ENCODE measurements at regions of chr10 and their contacts with region 1.

Region 1: DNA sequence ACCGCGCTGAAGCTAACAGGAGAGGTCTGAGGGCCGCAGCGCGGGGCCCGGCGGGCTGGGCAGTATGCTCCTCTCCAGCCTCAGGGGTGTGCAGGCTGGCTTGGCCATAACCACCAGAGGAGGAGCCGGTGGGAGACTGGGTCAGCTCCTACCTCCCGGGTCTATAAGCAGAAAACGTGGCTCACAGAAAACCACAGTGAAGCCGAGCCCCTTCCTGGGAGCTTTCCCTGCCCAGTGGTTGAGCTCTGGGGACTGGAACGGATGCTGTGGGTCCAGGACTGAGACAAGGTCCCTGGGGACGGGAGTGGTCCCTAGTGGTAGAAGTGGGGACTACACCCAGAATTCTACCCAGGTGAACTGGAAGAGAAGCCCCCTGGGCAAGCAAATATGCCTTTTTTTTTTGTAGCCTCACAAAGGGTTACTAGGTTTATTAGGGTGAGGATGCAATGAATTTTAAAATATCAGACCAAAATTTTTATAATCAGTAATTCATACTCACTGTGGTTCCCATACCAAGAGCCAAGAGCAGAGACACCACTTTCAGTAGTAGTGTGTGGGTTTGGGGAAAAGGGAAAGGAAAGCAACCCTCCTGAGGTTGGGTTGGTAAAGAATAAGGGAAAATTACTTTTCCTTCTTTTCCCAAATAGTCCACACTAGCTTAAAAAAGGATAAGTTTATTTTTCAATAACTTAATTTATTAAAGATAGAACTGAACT is 67.9 kb upstream of the PRKCQ start:
- DNase-seq: peak; percentile 43 to 84 (median 74)
- ATAC-seq: peak; percentile 99
- H3K4me3 ChIP-seq: no peak overlapping the region
- H3K4me3 Mint-ChIP-seq: no peak overlapping the region
- H3K27ac ChIP-seq: no peak overlapping the region
- H3K27ac Mint-ChIP-seq: no peak overlapping the region
- H3K4me1 ChIP-seq: peaks cover 15% of the 10 kb centered on the region
- H3K4me1 Mint-ChIP-seq: peaks cover 22% of the 10 kb centered on the region
- H3K27me3 ChIP-seq: no peaks in the 10 kb centered on the region
- H3K27me3 Mint-ChIP-seq: no peaks in the 10 kb centered on the region
- CTCF ChIP-seq: peak; percentile 90

Region 2: GRCh38 chr10:6445501-6446316 is 202.3 kb before region 1 on chr10:
- CTCF ChIA-PET with region 1: interaction called, 33 read pairs
- POLR2A ChIA-PET with region 1: interaction called, 7 read pairs
- intact Hi-C with region 1: loop called (anchors 1 kb)
- DNase-seq: peak; percentile 36 to 76 (median 64)
- ATAC-seq: peak; percentile 58
- H3K4me3 ChIP-seq: no peak overlapping the region
- H3K4me3 Mint-ChIP-seq: no peak overlapping the region
- H3K27ac ChIP-seq: peak overlapping the region in 1 of 2 experiments; percentile 47
- H3K27ac Mint-ChIP-seq: peak overlapping the region; percentile 83
- H3K4me1 ChIP-seq: peaks cover 8% of the 10 kb centered on the region
- H3K4me1 Mint-ChIP-seq: peaks cover 22% of the 10 kb centered on the region
- H3K27me3 ChIP-seq: no peaks in the 10 kb centered on the region
- H3K27me3 Mint-ChIP-seq: no peaks in the 10 kb centered on the region
- CTCF ChIP-seq: peak; percentile 73

Region 3: DNA sequence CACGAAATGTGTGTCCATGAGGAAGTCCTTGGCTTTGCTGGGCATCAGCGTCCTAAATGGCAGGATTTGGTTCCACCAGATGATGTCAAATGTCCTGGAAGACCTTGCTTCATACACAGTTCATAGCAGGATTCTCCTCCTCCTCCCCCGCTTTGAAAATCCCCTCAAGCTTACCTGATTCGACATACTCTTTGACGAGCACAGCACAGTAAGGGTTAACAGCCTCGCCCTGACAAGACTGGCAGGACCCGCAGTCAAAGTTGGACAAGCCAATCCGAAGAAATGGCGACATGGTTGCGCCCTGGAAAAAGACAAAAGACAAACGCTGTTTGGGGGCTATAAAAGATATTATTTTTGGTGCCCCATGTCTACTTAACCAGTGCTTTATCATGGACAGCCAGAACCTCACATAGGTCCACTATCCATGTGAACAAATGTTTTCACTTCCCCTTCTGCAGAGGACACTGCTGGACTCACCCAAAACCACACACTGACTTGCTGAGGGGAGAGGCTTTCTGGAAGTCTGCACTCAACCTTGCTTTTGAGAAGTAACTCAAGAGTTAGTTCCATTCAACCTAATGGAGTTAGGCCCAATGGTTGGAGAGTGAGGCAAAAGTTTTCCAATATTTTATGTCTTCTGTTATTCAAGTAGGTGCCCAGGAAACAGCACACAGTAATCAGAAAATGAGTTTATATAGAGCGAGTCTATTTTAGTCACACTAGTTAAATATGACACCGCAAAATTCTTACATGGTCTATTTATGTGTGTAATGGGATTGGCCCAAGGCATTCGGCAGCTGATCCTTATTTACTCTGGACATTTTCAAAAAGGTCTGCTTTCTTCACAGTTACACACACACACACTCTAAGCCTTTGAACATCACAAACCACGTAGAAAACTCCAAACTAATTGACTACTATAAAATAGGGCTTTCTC is 132.9 kb before region 1 on chr10:
- CTCF ChIA-PET with region 1: interaction called, 4 read pairs
- POLR2A ChIA-PET with region 1: no interaction called
- intact Hi-C with region 1: loop called (anchors 2 to 5 kb)
- DNase-seq: no peak
- ATAC-seq: no peak
- H3K4me3 ChIP-seq: no peak overlapping the region
- H3K4me3 Mint-ChIP-seq: no peak overlapping the region
- H3K27ac ChIP-seq: peak overlapping the region in 1 of 2 experiments; percentile 33
- H3K27ac Mint-ChIP-seq: peak overlapping the region; percentile 65
- H3K4me1 ChIP-seq: peaks cover 43% of the 10 kb centered on the region
- H3K4me1 Mint-ChIP-seq: peaks cover 79% of the 10 kb centered on the region
- H3K27me3 ChIP-seq: no peaks in the 10 kb centered on the region
- H3K27me3 Mint-ChIP-seq: no peaks in the 10 kb centered on the region
- CTCF ChIP-seq: no peak

Region 4: GRCh38 chr10:6621536-6621935 is 26.4 kb before region 1 on chr10:
- CTCF ChIA-PET with region 1: interaction called, 10 read pairs
- POLR2A ChIA-PET with region 1: no interaction called
- intact Hi-C with region 1: no loop called
- DNase-seq: no peak
- ATAC-seq: no peak
- H3K4me3 ChIP-seq: no peak overlapping the region
- H3K4me3 Mint-ChIP-seq: no peak overlapping the region
- H3K27ac ChIP-seq: no peak overlapping the region
- H3K27ac Mint-ChIP-seq: no peak overlapping the region
- H3K4me1 ChIP-seq: peaks cover 10% of the 10 kb centered on the region
- H3K4me1 Mint-ChIP-seq: peaks cover 12% of the 10 kb centered on the region
- H3K27me3 ChIP-seq: no peaks in the 10 kb centered on the region
- H3K27me3 Mint-ChIP-seq: no peaks in the 10 kb centered on the region
- CTCF ChIP-seq: no peak

Region 5: DNA sequence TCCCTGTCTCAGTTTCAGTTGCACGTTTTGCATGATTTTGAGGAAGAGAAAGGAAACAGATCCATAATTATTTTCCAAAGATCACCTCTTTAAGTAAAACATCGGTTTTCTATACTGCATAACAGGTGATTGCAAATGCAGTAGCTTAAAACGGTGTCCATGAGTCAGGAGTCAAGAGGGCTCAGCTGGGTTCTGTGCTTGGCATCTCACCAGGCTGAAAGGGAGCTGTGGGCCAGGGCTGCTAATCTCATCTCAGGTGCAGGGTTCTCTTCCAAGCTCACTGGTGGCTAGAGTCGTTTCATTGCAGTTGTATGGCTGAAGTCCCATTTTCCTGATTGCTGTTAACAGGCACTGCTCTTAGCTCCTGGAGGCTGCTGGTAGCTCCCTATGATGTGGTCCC is 10.9 kb before region 1 on chr10:
- CTCF ChIA-PET with region 1: interaction called, 11 read pairs
- POLR2A ChIA-PET with region 1: no interaction called
- intact Hi-C with region 1: no loop called
- DNase-seq: no peak
- ATAC-seq: no peak
- H3K4me3 ChIP-seq: no peak overlapping the region
- H3K4me3 Mint-ChIP-seq: no peak overlapping the region
- H3K27ac ChIP-seq: no peak overlapping the region
- H3K27ac Mint-ChIP-seq: no peak overlapping the region
- H3K4me1 ChIP-seq: peaks cover 10% of the 10 kb centered on the region
- H3K4me1 Mint-ChIP-seq: peaks cover 15% of the 10 kb centered on the region
- H3K27me3 ChIP-seq: no peaks in the 10 kb centered on the region
- H3K27me3 Mint-ChIP-seq: no peaks in the 10 kb centered on the region
- CTCF ChIP-seq: no peak